ENCODE measurements at regions of chr2 and their contacts with region 1.

Region 1: DNA sequence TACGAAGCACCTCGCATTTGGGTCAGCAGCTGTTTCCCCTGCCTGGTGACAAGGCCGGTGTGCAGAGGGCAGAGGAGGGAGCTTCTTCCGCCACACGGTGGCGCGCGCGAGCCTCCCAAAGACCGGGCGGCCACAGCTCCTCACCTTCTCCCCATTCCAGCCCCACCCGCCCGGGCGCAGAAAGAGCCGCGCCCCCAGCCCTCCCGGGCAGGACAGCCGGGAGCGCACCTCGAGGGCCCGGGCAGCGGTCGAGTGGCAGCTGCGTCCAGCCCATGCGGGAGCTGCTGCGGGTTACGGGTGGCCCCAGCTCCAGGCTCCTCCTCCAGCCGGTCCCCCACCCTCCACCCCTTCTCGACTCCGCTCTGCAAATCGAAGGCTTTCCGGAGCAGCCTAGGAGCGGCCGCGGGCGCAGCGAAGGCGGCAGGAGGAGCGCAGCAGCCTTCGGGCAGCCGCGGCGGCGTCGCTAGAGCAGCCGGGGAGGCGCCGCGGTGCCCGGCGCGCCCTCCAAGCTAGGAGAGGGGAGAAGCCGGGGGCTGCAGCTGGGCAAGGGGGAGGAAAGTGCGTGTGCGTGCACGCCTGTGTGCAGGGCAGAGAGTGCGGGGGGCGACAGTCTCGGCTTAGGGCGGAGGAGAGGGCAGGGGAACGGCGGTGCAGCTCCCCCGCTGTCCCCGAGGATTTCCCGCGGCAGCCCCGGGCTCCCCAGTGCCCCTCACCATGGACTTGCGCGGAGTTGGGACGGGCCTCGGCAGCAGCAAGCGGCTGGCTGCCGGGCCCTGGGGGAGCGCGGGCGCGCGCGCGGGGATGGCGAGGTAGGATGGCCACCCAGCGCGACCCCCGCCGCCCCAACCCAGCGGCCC is at the start of gene CCDC85A:
- DNase-seq: peak; percentile 67 to 90
- H3K4me3 ChIP-seq: peak within 1 kb of the TSS; percentile 32
- H3K4me1 ChIP-seq: no peaks in the 10 kb centered on the region
- H3K27me3 ChIP-seq: peaks cover 42% of the 10 kb centered on the region

Region 2: GRCh38 chr2:56749152-56749752 is 565.4 kb after region 1 on chr2:
- in situ Hi-C with region 1: loop called (anchors 25 kb)
- DNase-seq: peak in 1 of 2 experiments; percentile 43
- H3K4me3 ChIP-seq: no peak overlapping the region
- H3K4me1 ChIP-seq: no peaks in the 10 kb centered on the region
- H3K27me3 ChIP-seq: no peaks in the 10 kb centered on the region

Region 3: GRCh38 chr2:57516698-57517340 is 1332.9 kb after region 1 on chr2:
- in situ Hi-C with region 1: loop called (anchors 25 kb)
- DNase-seq: peak in 1 of 2 experiments; percentile 58
- H3K4me3 ChIP-seq: no peak overlapping the region
- H3K4me1 ChIP-seq: no peaks in the 10 kb centered on the region
- H3K27me3 ChIP-seq: no peaks in the 10 kb centered on the region